ENCODE measurements at regions of chr4 and their contacts with region 1.

Region 1: GRCh38 chr4:40309250-40309774 is 25.8 kb upstream of the CHRNA9 start:
- DNase-seq: peak; percentile 75 to 89 (median 86)
- ATAC-seq: peak; percentile 79
- H3K4me3 ChIP-seq: peak overlapping the region; percentile 35
- H3K4me3 Mint-ChIP-seq: peak overlapping the region; percentile 67 to 91 (median 78)
- H3K27ac ChIP-seq: peak overlapping the region; percentile 87
- H3K27ac Mint-ChIP-seq: peak overlapping the region; percentile 94 to 100 (median 99)
- H3K4me1 ChIP-seq: peaks cover 50 to 81% of the 10 kb centered on the region in 2 donors
- H3K4me1 Mint-ChIP-seq: peaks cover 61 to 97% (median 90%) of the 10 kb centered on the region in 7 donors
- H3K27me3 ChIP-seq: no peaks in the 10 kb centered on the region
- H3K27me3 Mint-ChIP-seq: no peaks in the 10 kb centered on the region

Region 2: DNA sequence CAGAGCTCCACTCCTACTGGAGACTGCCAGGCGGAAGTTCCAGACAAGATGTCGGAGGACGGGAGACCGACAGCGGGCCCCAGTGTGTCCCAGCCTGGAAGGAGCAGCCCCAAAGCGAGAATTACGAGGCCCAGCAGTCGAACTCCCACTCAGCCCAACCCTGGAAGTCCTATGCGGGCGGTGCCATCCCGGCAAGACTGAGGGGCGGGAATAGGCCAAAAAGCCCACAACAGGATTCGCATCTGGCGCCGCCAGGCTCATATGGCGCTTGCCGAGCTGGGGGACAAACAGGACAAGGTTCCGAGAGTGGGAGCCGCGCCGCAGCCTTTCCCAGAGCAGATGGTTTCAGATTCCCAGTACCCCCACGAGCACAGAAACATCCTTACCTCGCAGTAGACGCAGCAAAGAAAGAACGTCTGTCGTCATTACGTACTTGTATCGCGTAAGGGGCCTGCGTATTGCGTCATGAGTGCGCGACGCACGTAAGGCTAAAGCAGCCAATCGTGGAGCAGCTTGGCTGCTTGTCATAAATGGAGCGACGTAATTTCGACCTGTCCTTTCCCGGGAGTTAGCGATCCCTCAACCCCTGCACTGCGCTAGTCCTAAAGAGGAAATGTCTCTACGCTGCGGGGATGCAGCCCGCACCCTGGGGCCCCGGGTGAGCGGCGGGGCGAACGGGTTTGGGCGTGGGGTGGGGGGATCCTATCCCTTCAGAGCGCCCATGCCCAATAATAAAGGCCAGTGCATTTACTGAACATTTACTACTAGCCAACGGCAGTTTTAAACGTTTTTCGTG is 850.6 kb before region 1 on chr4 and contains the starts of genes LIAS and RPL9:
- CTCF ChIA-PET with region 1: no interaction called
- POLR2A ChIA-PET with region 1: no interaction called
- intact Hi-C with region 1: loop called in 1 of 2 experiments (anchors 10 kb)
- DNase-seq: peak; percentile 80 to 96 (median 92)
- ATAC-seq: peak; percentile 93
- H3K4me3 ChIP-seq: peak within 1 kb of the TSS; percentile 85
- H3K4me3 Mint-ChIP-seq: peak within 1 kb of the TSS; percentile 92 to 99 (median 96)
- H3K27ac ChIP-seq: peak within 1 kb of the TSS; percentile 95
- H3K27ac Mint-ChIP-seq: peak within 1 kb of the TSS; percentile 98 to 100 (median 99)
- H3K4me1 ChIP-seq: peaks cover 17 to 19% of the 10 kb centered on the region in 2 donors
- H3K4me1 Mint-ChIP-seq: peaks cover 8 to 60% (median 47%) of the 10 kb centered on the region in 7 donors
- H3K27me3 ChIP-seq: no peaks in the 10 kb centered on the region
- H3K27me3 Mint-ChIP-seq: peaks cover 0 to 2% (median 0%) of the 10 kb centered on the region in 5 donors
- total RNA-seq, gene LIAS: 14.5 to 27.8 (median 16.4) TPM
- total RNA-seq, gene RPL9: 1,414 to 3,398 (median 2,567) TPM

Region 3: DNA sequence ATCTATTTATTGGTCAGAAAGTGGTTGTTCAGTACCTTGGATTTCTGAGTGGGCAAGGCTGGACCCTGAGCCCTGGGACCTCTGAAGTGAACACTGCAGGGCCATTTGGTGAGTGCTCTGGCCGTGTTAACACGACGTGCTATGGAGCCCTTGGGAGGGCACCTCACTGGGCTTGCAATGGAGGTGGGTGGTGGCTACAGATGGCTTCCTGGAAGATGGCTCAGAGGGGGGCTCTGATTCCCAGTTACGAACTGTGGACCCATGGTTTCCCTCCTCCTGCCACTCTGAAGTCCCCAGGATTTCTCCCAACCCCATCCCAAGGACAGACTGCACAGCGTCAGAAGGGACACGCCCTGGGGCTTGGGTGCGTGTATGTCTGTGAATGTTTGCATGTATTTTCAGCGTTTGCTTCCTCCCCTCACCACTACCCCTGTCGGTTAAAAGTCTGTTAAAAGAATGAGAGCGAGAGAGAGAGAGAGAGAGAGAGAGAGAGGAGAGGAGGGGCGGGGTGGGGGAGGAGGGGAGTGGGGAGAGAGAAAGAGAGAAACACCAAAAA is 116.2 kb before region 1 on chr4:
- CTCF ChIA-PET with region 1: interaction called, 7 read pairs
- POLR2A ChIA-PET with region 1: interaction called, 229 read pairs
- intact Hi-C with region 1: loop called in 1 of 2 experiments (anchors 1 kb)
- DNase-seq: peak in 8 of 9 donors; percentile 41 to 80 (median 74)
- ATAC-seq: peak; percentile 44
- H3K4me3 ChIP-seq: peak overlapping the region; percentile 61
- H3K4me3 Mint-ChIP-seq: peak overlapping the region; percentile 96 to 100 (median 99)
- H3K27ac ChIP-seq: peak overlapping the region; percentile 100
- H3K27ac Mint-ChIP-seq: peak overlapping the region; percentile 93 to 100 (median 99)
- H3K4me1 ChIP-seq: peaks cover 23 to 47% of the 10 kb centered on the region in 2 donors
- H3K4me1 Mint-ChIP-seq: peaks cover 47 to 80% (median 65%) of the 10 kb centered on the region in 7 donors
- H3K27me3 ChIP-seq: no peaks in the 10 kb centered on the region
- H3K27me3 Mint-ChIP-seq: peaks cover 0 to 4% (median 0%) of the 10 kb centered on the region in 5 donors

Region 4: GRCh38 chr4:40228497-40229365 is 80.6 kb before region 1 on chr4:
- CTCF ChIA-PET with region 1: interaction called, 11 read pairs
- POLR2A ChIA-PET with region 1: interaction called, 63 read pairs
- intact Hi-C with region 1: loop called (anchors 1 to 2 kb)
- DNase-seq: peak in 1 of 9 donors; percentile 23
- ATAC-seq: no peak
- H3K4me3 ChIP-seq: peak overlapping the region; percentile 21
- H3K4me3 Mint-ChIP-seq: peak overlapping the region; percentile 74 to 87 (median 81)
- H3K27ac ChIP-seq: peak overlapping the region; percentile 74
- H3K27ac Mint-ChIP-seq: peak overlapping the region; percentile 87 to 99 (median 97)
- H3K4me1 ChIP-seq: peaks cover 86 to 98% of the 10 kb centered on the region in 2 donors
- H3K4me1 Mint-ChIP-seq: peaks cover 58 to 100% (median 90%) of the 10 kb centered on the region in 7 donors
- H3K27me3 ChIP-seq: no peaks in the 10 kb centered on the region
- H3K27me3 Mint-ChIP-seq: no peaks in the 10 kb centered on the region

Region 5: GRCh38 chr4:40255393-40256281 is 53.7 kb before region 1 on chr4:
- CTCF ChIA-PET with region 1: interaction called, 9 read pairs
- POLR2A ChIA-PET with region 1: interaction called, 206 read pairs
- intact Hi-C with region 1: loop called (anchors 1 kb)
- DNase-seq: no peak
- ATAC-seq: no peak
- H3K4me3 ChIP-seq: no peak overlapping the region
- H3K4me3 Mint-ChIP-seq: peak overlapping the region; percentile 47 to 93 (median 64)
- H3K27ac ChIP-seq: peak overlapping the region; percentile 58
- H3K27ac Mint-ChIP-seq: peak overlapping the region; percentile 79 to 99 (median 92)
- H3K4me1 ChIP-seq: peaks cover 22 to 68% of the 10 kb centered on the region in 2 donors
- H3K4me1 Mint-ChIP-seq: peaks cover 46 to 83% (median 77%) of the 10 kb centered on the region in 7 donors
- H3K27me3 ChIP-seq: no peaks in the 10 kb centered on the region
- H3K27me3 Mint-ChIP-seq: no peaks in the 10 kb centered on the region

Region 6: DNA sequence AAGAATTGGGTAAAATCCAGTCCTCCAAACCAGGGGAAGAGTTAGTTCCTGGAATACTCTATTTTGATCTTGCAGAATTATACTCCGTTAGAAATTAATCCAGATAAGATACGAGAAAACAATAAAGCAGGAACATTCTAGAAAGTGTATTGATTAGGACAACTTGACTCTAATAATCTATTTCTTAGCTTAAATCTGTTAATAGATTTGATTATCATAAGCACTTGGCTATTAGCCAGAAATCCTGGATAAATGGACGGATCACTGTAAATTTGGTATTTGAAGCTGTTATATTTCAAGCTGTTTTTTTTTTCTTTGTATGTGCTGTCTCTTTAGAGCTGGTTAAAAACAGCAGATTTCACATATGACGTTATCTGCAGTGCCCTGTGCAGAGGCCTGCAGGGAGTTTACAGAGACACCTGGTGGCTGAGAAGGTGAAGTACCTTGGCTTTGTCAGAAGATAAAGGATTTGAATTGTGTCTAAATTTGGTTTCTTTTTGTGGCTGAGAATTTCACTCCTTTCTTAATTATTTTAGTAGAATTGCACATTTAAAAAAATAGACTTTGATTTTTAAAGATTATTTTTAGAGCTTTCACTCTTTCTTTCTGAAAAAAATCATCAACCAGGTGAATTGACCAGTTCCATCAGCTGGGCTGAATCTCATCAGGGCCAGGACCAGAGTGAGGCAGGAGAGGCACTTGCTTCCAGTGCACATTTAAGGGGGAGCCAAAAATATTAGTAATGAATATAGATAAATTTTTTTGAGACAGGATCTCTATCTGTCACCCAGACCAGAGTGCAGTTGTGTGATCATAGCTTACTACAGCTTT is 16.1 kb after region 1 on chr4:
- CTCF ChIA-PET with region 1: interaction called, 18 read pairs
- POLR2A ChIA-PET with region 1: interaction called, 9 read pairs
- intact Hi-C with region 1: loop called (anchors 1 kb)
- DNase-seq: peak in 7 of 9 donors; percentile 70 to 85 (median 82)
- ATAC-seq: peak; percentile 100
- H3K4me3 ChIP-seq: no peak overlapping the region
- H3K4me3 Mint-ChIP-seq: peak overlapping the region in 4 of 10 donors; percentile 0 to 48 (median 14)
- H3K27ac ChIP-seq: peak overlapping the region; percentile 45
- H3K27ac Mint-ChIP-seq: peak overlapping the region in 8 of 9 donors; percentile 25 to 87 (median 64)
- H3K4me1 ChIP-seq: peaks cover 0 to 8% of the 10 kb centered on the region in 2 donors
- H3K4me1 Mint-ChIP-seq: peaks cover 13 to 40% (median 35%) of the 10 kb centered on the region in 7 donors
- H3K27me3 ChIP-seq: no peaks in the 10 kb centered on the region
- H3K27me3 Mint-ChIP-seq: peaks cover 0 to 7% (median 4%) of the 10 kb centered on the region in 5 donors